Breast epithelium (tissue), 4 donors: ENCODE measurements at regions of chr1 and their contacts with region 1.

Region 1: DNA sequence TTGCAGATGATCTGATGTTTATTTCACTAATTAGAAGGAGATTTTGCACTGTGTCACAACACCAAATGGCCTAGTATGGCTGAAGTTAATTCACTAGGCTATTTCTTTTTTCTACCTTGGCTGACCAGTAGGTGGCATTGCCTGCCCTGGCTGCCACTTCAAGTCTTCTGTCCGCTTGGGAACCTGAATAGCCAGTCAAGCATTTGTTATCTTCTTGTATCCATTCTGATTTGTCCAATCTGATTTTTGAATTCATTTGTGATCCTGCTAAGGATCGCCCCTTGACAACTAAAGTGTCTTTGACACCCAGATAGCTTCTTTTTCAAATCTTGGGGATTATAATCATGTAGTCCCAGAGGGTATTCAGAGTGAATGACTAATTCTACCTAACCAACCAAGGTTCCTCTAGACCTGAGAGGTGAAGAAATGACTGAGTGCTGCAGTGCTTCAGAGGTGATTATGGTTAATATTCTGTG is 99.4 kb downstream of the GIPC2 start:
- DNase-seq: peak in 1 of 2 donors; percentile 21
- H3K4me3 ChIP-seq: no peak overlapping the region
- H3K27ac ChIP-seq: no peak overlapping the region
- H3K4me1 ChIP-seq: no peaks in the 10 kb centered on the region
- H3K27me3 ChIP-seq: no peaks in the 10 kb centered on the region
- CTCF ChIP-seq: peak; percentile 71 to 85 (median 73)
- POLR2A ChIP-seq: no peak

Region 2: GRCh38 chr1:78607334-78607927 is 462.3 kb after region 1 on chr1:
- intact Hi-C with region 1: loop called (anchors 10 kb)
- DNase-seq: no peak
- H3K4me3 ChIP-seq: no peak overlapping the region
- H3K27ac ChIP-seq: no peak overlapping the region
- H3K4me1 ChIP-seq: no peaks in the 10 kb centered on the region
- H3K27me3 ChIP-seq: no peaks in the 10 kb centered on the region
- CTCF ChIP-seq: peak; percentile 61 to 77 (median 64)
- POLR2A ChIP-seq: no peak